ENCODE measurements at regions of chr14 and their contacts with region 1.

Region 1: DNA sequence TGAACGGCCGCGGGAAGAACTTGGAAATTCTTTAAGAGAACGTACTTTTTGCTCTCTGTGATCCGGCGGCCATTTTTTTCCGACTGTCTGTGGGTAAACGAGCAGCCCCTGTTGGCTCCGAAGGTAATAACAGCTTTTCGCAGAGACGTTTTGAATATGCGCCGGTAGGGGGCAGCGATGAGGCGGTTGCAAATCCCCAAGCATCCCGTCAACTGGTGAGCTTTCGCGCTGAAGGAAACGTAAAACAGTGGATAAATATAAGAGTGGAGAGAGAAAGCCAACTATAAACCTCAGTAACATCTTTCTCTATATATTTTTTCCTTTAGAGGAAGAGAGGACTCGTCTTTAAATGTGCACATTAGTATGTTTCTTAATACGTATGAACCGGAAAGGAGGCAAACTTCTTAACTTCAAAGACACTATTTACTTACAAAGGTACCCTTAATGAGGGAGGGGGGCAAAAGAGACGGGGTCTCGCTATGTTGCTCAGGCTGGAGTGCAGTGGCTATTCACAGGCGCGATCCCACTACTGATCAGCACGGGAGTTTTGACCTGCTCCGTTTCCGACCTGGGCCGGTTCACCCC is 9.6 kb upstream of the NEMF start:
- DNase-seq: peak; percentile 69 to 89 (median 85)
- H3K4me3 ChIP-seq: peak overlapping the region; percentile 94
- H3K4me3 Mint-ChIP-seq: no peak overlapping the region
- H3K27ac ChIP-seq: peak overlapping the region; percentile 95
- H3K27ac Mint-ChIP-seq: no peak overlapping the region
- H3K4me1 ChIP-seq: peaks cover 39% of the 10 kb centered on the region
- H3K4me1 Mint-ChIP-seq: peaks cover 10 to 13% (median 12%) of the 10 kb centered on the region in 3 donors
- H3K27me3 ChIP-seq: no peaks in the 10 kb centered on the region
- H3K27me3 Mint-ChIP-seq: peaks cover 0 to 13% of the 10 kb centered on the region in 2 donors

Region 2: DNA sequence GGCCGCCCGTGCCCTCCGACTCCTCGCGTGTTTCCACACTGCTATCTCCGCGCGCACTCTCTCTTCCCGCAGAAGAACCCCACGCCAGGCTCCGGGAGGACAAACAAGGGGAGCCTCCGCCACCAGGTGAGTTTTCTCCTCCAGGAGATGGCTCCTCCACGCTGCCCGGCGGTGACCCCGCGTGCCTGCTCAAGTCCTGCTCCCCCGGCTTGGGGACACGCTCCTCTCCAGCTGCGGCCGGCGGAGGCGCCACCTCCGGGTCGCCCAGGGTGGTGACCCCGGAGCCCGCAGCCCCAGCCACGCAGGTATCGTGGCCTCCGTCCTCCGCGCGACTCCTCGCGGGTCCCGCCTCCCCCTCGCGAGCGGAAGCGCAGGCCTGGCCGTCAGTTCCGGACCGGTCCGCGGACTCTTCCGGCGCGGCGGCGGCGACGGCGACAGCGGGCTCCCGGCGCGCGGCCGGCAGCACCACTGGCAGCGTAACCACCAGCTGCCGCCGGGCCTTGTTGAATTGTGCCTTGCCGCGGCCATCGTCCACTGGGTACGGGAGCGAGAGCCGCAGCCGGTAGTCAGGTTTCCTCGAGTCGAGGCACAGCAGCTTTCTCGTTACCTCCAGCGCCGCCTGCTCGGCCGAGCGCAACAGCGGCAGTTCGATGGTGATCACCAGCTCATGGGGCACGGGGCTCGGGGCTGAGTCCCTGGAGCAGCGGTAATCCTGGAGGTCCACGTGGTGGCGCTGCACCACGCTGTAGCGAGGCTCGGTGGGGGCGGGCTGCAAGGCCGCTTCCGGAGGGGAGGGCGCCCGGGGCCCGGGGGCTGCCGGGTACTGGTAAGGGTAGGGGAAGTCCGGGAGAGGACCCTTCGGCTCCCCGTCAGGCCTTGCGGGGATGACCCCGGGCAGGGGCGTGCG is 228.3 kb before region 1 on chr14:
- CTCF ChIA-PET with region 1: interaction called, 22 read pairs
- POLR2A ChIA-PET with region 1: interaction called, 14 read pairs
- DNase-seq: peak; percentile 90 to 96 (median 94)
- H3K4me3 ChIP-seq: peak overlapping the region; percentile 96
- H3K4me3 Mint-ChIP-seq: peak overlapping the region; percentile 92 to 100 (median 95)
- H3K27ac ChIP-seq: peak overlapping the region; percentile 99
- H3K27ac Mint-ChIP-seq: peak overlapping the region; percentile 91 to 100 (median 95)
- H3K4me1 ChIP-seq: peaks cover 32% of the 10 kb centered on the region
- H3K4me1 Mint-ChIP-seq: peaks cover 47 to 78% (median 60%) of the 10 kb centered on the region in 3 donors
- H3K27me3 ChIP-seq: no peaks in the 10 kb centered on the region
- H3K27me3 Mint-ChIP-seq: peaks cover 0 to 1% of the 10 kb centered on the region in 2 donors

Region 3: DNA sequence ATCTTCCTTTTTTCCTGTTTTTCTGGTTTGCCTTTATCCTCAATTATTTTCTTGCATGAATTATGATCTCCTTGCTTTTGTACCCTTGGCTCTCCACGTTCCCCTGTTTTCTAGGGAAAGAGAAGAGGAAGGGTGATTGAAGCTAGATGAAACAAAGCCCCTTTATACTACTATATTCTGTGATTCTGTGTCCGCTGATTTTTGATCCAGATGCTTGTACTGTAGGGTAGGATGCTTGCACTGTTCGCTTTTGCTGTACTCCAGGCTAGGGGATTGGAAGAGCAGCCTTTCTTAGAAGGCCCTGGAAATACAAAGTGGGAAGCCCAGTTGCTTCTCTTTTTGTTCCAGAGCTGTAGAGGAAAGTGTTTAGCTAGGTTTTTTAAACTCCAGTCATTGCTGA is 129.3 kb before region 1 on chr14:
- CTCF ChIA-PET with region 1: no interaction called
- POLR2A ChIA-PET with region 1: no interaction called
- DNase-seq: no peak
- H3K4me3 ChIP-seq: no peak overlapping the region
- H3K4me3 Mint-ChIP-seq: no peak overlapping the region
- H3K27ac ChIP-seq: no peak overlapping the region
- H3K27ac Mint-ChIP-seq: peak overlapping the region in 1 of 8 donors; percentile 38
- H3K4me1 ChIP-seq: no peaks in the 10 kb centered on the region
- H3K4me1 Mint-ChIP-seq: no peaks in the 10 kb centered on the region
- H3K27me3 ChIP-seq: no peaks in the 10 kb centered on the region
- H3K27me3 Mint-ChIP-seq: no peaks in the 10 kb centered on the region

Region 4: DNA sequence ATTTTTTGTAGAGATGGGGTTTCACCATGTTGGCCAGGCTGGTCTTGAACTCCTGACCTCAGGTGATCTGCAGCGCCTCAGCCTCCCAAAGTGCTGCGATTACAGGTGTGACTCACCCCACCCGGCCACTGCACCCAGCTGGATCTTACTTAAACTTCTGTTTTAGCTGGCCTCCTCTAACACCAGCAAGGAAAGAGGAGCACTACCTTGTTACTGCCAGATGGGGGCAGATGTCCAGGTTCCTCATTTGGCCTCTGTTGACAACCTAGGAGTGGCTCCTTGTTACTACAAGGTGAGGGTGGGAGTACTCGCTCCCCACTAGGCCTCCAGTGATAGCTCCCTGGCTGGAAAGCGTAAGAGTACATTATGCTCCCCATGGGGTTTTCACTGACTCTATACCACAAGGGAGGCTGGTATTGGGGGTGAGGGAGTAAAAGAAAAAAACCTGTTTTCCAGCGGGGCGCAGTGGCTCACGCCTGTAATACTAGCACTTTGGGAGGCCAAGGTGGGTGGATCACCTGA is 17.6 kb after region 1 on chr14:
- CTCF ChIA-PET with region 1: interaction called, 23 read pairs
- POLR2A ChIA-PET with region 1: interaction called, 8 read pairs
- DNase-seq: peak in 4 of 5 donors; percentile 34 to 72 (median 56)
- H3K4me3 ChIP-seq: no peak overlapping the region
- H3K4me3 Mint-ChIP-seq: no peak overlapping the region
- H3K27ac ChIP-seq: no peak overlapping the region
- H3K27ac Mint-ChIP-seq: peak overlapping the region in 6 of 8 donors; percentile 36 to 96 (median 62)
- H3K4me1 ChIP-seq: peaks cover 11% of the 10 kb centered on the region
- H3K4me1 Mint-ChIP-seq: peaks cover 3 to 12% (median 10%) of the 10 kb centered on the region in 3 donors
- H3K27me3 ChIP-seq: no peaks in the 10 kb centered on the region
- H3K27me3 Mint-ChIP-seq: no peaks in the 10 kb centered on the region

Region 5: DNA sequence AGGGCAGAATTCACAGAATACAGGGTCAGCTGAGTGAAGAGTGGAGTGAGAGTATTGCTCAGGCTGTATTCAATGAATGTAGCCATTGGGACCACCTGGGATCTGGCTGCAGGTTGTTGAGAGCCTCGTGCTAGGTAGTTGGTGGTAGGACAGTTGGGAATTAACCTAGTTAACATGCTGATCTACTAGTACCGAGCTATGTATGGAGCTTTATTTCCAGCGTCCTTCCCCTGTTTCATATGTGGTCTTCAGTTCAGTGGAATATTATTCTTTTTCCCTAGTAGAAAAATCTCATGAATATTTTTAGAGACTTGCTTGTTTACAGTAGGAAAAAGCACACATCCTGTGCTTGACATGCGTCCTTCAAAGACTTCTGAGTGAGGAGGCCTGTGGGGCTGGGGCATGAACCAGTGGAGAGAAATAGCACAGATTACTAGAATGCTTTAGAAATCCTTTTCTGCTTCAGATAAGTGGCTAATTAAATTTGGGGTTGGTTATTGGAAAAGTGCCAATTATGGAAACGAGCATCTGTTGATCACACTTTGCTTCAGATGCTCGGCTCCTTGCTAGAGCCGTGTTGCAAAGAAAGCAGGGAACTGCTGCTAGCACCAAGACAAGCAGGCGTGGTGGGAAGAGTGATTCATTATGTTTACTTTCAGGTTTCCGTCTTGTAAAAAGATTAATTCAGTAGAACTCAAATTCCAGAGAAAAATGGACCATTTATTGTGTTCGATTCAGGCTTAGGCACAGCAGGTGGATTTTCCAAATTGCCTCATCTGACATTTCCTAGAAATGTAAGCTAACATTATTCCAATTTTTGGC is 84.3 kb after region 1 on chr14:
- CTCF ChIA-PET with region 1: interaction called, 6 read pairs
- POLR2A ChIA-PET with region 1: interaction called, 11 read pairs
- DNase-seq: peak in 1 of 5 donors; percentile 22
- H3K4me3 ChIP-seq: peak overlapping the region; percentile 32
- H3K4me3 Mint-ChIP-seq: peak overlapping the region in 6 of 7 donors; percentile 63 to 86 (median 65)
- H3K27ac ChIP-seq: no peak overlapping the region
- H3K27ac Mint-ChIP-seq: peak overlapping the region; percentile 77 to 99 (median 93)
- H3K4me1 ChIP-seq: peaks cover 43% of the 10 kb centered on the region
- H3K4me1 Mint-ChIP-seq: peaks cover 64 to 84% (median 83%) of the 10 kb centered on the region in 3 donors
- H3K27me3 ChIP-seq: no peaks in the 10 kb centered on the region
- H3K27me3 Mint-ChIP-seq: no peaks in the 10 kb centered on the region

Region 6: DNA sequence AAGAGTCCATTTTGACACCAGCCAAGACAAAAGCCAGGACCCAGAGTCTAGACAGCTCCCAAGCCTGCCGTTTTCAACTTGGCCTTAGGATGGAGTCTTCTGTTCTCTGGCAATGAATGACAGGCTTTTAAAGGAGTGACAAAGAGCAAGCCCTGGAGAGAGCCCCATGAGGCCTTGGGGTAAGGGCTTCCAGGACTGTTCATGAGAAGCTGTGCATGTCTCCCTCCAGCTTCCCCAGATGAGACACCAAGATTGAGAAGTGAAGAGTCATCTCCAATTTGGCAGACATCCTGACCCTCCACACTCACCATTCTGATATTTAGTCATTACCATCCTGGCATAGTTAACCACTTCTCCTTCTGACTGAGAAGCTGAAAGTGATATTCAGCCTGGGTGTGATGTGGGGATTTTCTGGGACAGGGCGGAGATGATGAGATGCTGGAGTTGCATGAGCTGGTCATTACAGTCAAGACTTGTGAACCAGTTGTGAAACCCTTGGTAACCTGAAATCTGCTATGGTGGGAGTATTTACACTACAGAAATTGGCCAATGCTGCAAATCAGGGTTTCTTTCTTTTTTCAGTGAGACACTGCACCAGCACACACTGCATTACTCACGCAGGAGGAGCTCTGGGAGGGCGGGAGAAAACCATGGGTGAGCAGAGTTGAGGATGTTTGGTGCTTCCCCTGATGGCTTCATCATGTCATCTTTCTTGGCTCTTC is 176.4 kb after region 1 on chr14:
- CTCF ChIA-PET with region 1: interaction called, 18 read pairs
- POLR2A ChIA-PET with region 1: interaction called, 5 read pairs
- DNase-seq: peak in 1 of 5 donors; percentile 56
- H3K4me3 ChIP-seq: no peak overlapping the region
- H3K4me3 Mint-ChIP-seq: peak overlapping the region; percentile 32 to 87 (median 66)
- H3K27ac ChIP-seq: no peak overlapping the region
- H3K27ac Mint-ChIP-seq: peak overlapping the region; percentile 87 to 99 (median 94)
- H3K4me1 ChIP-seq: peaks cover 53% of the 10 kb centered on the region
- H3K4me1 Mint-ChIP-seq: peaks cover 48 to 67% (median 56%) of the 10 kb centered on the region in 3 donors
- H3K27me3 ChIP-seq: no peaks in the 10 kb centered on the region
- H3K27me3 Mint-ChIP-seq: no peaks in the 10 kb centered on the region

Region 7: DNA sequence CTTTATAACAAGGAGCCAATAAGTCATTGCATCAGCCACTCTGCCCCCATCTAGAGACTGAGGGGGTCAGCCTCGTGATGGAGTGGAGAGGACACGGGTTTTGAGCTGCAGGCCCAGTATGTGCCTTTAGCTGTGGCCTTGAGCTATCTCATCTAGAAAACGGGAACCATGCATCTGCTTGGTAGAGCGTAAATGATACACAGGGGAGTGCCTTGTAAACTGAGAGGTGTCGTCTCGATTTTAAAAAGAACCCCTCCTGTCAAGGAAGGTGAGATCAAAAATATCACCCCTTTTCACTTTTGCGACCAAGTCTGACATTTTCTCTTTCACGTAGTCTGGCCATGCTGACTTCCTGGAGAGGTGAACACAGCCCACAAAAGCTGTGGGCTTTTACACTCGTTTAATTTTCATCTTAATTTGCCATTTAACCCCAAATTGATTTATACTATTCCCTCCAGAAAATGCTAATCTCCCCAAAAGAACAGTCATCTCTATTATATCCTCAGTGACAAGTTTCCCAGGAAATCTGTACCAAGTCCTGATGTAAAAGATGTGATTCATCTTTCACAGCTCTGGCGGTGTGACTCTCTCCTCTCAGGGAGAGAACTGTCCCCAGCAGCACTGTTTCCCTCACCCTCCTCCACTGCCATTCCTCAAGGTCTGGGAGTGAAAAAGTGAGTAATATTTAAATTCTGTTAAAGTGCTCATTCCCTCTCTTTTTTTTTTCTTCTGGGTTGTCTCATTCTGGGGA is 223.6 kb after region 1 on chr14:
- CTCF ChIA-PET with region 1: interaction called, 89 read pairs
- POLR2A ChIA-PET with region 1: interaction called, 16 read pairs
- DNase-seq: peak; percentile 21 to 54 (median 44)
- H3K4me3 ChIP-seq: peak overlapping the region; percentile 7
- H3K4me3 Mint-ChIP-seq: peak overlapping the region; percentile 6 to 89 (median 71)
- H3K27ac ChIP-seq: peak overlapping the region; percentile 35
- H3K27ac Mint-ChIP-seq: peak overlapping the region; percentile 89 to 99 (median 97)
- H3K4me1 ChIP-seq: peaks cover 93% of the 10 kb centered on the region
- H3K4me1 Mint-ChIP-seq: peaks cover 75 to 93% (median 86%) of the 10 kb centered on the region in 3 donors
- H3K27me3 ChIP-seq: no peaks in the 10 kb centered on the region
- H3K27me3 Mint-ChIP-seq: no peaks in the 10 kb centered on the region

Region 8: GRCh38 chr14:50116181-50116956 is 254.2 kb after region 1 on chr14 and contains the start of gene VCPKMT:
- CTCF ChIA-PET with region 1: interaction called, 29 read pairs
- POLR2A ChIA-PET with region 1: interaction called, 24 read pairs
- DNase-seq: peak; percentile 93 to 97 (median 96)
- H3K4me3 ChIP-seq: peak within 1 kb of the TSS; percentile 40
- H3K4me3 Mint-ChIP-seq: peak within 1 kb of the TSS; percentile 95 to 97 (median 97)
- H3K27ac ChIP-seq: peak within 1 kb of the TSS; percentile 78
- H3K27ac Mint-ChIP-seq: peak within 1 kb of the TSS; percentile 94 to 99 (median 99)
- H3K4me1 ChIP-seq: peaks cover 26% of the 10 kb centered on the region
- H3K4me1 Mint-ChIP-seq: peaks cover 23 to 42% (median 29%) of the 10 kb centered on the region in 3 donors
- H3K27me3 ChIP-seq: no peaks in the 10 kb centered on the region
- H3K27me3 Mint-ChIP-seq: no peaks in the 10 kb centered on the region
- total RNA-seq, gene VCPKMT: 16.5 to 19.9 TPM

Measured in CD8-positive, alpha-beta memory T cell (primary cell).